ENCODE measurements at regions of chr21 and their contacts with region 1.

Region 1: GRCh38 chr21:32412162-32413014 is at the start of gene EVA1C:
- DNase-seq: peak; percentile 71
- ATAC-seq: peak; percentile 54
- H3K4me3 ChIP-seq: peak within 1 kb of the TSS; percentile 90
- H3K27ac ChIP-seq: peak within 1 kb of the TSS; percentile 65
- H3K4me1 ChIP-seq: peaks cover 28% of the 10 kb centered on the region
- H3K27me3 ChIP-seq: no peaks in the 10 kb centered on the region
- CTCF ChIP-seq: no peak
- total RNA-seq, gene EVA1C: 16.1 and 17.5 TPM in 2 replicates

Region 2: GRCh38 chr21:32475164-32475812 is 62.9 kb after region 1 on chr21:
- CTCF ChIA-PET with region 1: interaction called, 4 read pairs
- POLR2A ChIA-PET with region 1: no interaction called
- intact Hi-C with region 1: loop called (anchors 5 kb)
- DNase-seq: peak; percentile 52
- ATAC-seq: peak; percentile 52
- H3K4me3 ChIP-seq: peak overlapping the region; percentile 25; the same call in 1 of the 2 replicates
- H3K27ac ChIP-seq: peak overlapping the region; percentile 41
- H3K4me1 ChIP-seq: peaks cover 38% of the 10 kb centered on the region
- H3K27me3 ChIP-seq: no peaks in the 10 kb centered on the region
- CTCF ChIP-seq: no peak

Region 3: DNA sequence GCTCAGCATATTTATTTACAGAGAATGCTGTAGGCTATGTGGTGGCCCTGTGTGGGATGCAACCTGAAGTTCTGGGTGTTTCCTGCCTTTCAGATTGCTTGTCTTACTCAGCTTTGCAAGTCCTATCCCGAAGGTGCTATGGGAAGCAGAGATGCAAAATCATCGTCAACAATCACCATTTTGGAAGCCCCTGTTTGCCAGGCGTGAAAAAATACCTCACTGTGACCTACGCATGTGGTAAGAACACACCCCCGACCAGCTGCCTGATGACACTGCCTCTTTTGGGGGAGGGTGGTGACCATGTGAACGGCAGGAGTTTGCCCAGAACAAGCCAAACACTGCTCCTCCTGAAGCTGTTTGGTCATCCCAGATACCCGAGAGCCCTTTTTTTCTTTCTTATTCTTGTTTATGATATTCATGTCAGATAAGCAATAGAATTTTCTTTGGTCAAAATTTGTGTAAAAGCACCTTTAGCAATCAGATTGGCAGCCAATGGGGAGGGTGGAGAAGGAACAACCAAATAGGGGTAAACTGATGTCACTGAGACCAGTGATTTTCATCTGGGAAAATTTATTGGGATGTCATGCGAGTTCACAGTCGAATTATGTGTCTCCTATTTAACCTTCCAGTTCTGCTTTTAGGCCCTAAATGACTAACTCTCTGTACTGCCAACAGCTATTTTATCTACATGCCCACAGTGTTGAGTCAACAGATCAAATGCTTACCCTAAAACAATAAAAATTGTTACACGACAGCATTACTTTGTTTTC is 82.7 kb after region 1 on chr21:
- CTCF ChIA-PET with region 1: interaction called, 3 read pairs
- POLR2A ChIA-PET with region 1: no interaction called
- intact Hi-C with region 1: loop called (anchors 2 kb)
- DNase-seq: peak; percentile 89
- ATAC-seq: peak; percentile 96
- H3K4me3 ChIP-seq: peak overlapping the region; percentile 10; the same call in 1 of the 2 replicates
- H3K27ac ChIP-seq: peak overlapping the region; percentile 94
- H3K4me1 ChIP-seq: peaks cover 34% of the 10 kb centered on the region
- H3K27me3 ChIP-seq: no peaks in the 10 kb centered on the region
- CTCF ChIP-seq: no peak

Region 4: DNA sequence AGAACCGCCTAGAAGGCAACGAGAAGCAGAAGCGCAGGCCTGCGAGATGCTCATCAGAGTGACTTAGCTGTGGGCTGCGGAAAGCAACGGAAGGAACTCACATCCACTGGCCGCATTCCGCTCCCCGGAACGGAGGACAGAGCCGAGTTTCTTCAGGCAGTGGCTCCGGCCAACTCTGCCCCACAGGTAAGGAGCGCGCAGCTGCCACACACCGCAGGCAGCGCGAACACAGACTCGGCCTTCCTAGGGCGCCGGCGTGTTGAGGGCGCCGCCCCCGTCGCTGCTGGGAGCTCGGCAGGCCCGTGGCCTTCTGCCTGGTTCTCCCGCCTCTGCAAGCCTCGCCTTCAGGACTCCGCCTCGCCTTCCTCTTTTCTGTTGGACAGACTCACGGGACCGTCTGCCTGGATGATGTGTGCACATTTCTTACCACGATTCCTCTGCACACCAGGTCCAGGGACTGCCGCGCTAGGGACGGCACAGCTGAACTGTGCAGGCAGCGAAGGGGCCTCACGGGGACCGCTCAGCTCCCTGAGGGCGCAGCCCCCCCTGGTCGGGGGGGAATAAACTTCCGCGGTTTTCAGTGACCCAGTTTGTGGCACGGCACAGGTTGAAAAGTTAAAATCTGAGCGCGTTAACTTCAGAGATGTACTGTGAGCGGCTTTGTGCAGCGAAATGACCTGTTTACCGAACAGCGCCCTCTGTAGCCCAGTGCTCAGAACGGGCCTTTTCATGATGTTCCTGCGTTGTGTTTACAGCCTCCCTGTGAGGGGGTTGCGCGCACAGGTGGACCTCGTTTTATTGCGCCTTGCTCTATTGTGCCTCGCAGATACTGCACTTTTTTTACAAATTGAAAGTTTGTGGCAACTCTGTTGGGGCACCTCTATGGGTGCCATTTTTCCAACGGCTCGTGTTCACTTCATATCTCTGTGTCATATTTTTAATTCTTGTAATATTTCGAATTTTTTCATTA is 157.2 kb after region 1 on chr21:
- CTCF ChIA-PET with region 1: interaction called, 4 read pairs
- POLR2A ChIA-PET with region 1: no interaction called
- intact Hi-C with region 1: loop called (anchors 1 kb)
- DNase-seq: peak; percentile 88
- ATAC-seq: peak; percentile 94
- H3K4me3 ChIP-seq: peak overlapping the region; percentile 81
- H3K27ac ChIP-seq: peak overlapping the region; percentile 85
- H3K4me1 ChIP-seq: peaks cover 11% of the 10 kb centered on the region
- H3K27me3 ChIP-seq: no peaks in the 10 kb centered on the region
- CTCF ChIP-seq: peak; percentile 91

Region 5: GRCh38 chr21:32770871-32771523 is 358.6 kb after region 1 on chr21:
- CTCF ChIA-PET with region 1: no interaction called
- POLR2A ChIA-PET with region 1: no interaction called
- intact Hi-C with region 1: loop called (anchors 10 kb)
- DNase-seq: peak; percentile 50
- ATAC-seq: peak; percentile 33
- H3K4me3 ChIP-seq: peak overlapping the region; percentile 93
- H3K27ac ChIP-seq: peak overlapping the region; percentile 67
- H3K4me1 ChIP-seq: peaks cover 26% of the 10 kb centered on the region
- H3K27me3 ChIP-seq: no peaks in the 10 kb centered on the region
- CTCF ChIP-seq: no peak

Measured in PC-3 (cell line).